ENCODE measurements at regions of chr19 and their contacts with region 1.

Region 1: DNA sequence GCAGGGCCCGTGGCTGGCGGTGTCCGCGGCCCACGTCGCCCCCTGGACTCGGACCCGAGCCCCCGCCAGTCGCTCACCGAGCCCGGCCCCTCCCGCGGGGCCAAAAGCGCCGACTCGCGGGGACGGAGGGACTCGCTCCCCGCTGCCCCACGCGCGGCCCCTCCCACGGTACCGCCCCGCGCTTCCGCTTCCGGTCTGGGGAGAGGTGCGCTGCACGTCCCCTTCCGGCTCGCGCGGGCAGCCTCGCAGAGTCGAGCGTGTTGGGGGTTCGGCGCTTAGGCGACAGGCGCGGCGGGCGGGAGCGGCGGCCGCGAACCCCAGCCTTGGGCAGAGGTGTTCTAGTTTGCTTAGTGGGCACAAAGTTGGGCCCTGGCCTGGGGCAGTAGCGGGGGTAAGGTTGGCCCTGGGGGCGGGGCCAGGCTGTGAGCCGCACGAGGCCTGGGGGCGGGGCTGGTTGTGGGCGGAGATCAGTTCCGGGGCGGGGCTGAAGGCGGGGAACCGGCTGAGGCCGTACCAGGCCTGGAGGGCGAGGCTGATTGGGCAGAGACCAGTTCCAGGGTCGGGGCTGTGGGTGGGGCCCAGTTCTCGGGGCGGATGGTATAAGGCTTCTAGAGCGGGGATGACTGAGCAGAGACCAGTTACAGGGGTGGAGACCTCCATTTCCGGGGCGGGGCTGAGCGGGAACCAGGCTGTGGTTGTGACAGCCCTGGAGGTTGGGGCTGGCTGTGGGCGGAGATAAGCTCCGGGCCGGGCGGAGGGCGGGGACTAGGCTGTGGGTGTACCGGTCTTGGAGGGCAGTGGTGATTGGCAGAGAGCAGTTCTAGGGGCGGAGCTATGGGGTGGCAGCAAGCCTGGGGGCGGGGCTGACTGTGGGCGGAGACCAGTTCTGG is at the starts of genes MBD3L1 and ZNF558:
- DNase-seq: peak; percentile 98 to 99
- ATAC-seq: peak; percentile 91 to 92
- H3K4me3 ChIP-seq: peak within 1 kb of the TSS; percentile 74 to 91 (median 83)
- H3K27ac ChIP-seq: peak within 1 kb of the TSS; percentile 91 to 96 (median 94)
- H3K4me1 ChIP-seq: peaks cover 8 to 12% of the 10 kb centered on the region in 2 donors
- H3K27me3 ChIP-seq: no peaks in the 10 kb centered on the region
- CTCF ChIP-seq: peak in 3 of 5 experiments; percentile 30 to 56 (median 42)
- POLR2A ChIP-seq: peak; percentile 82 to 92
- total RNA-seq, gene MBD3L1: not detected
- total RNA-seq, gene ZNF558: 14.4 to 24.5 (median 18.6) TPM

Region 2: GRCh38 chr19:7394731-7395359 is 1437.5 kb before region 1 on chr19:
- in situ Hi-C with region 1: no loop called
- intact Hi-C with region 1: loop called (anchors 5 kb)
- DNase-seq: peak; percentile 70 to 83
- ATAC-seq: peak; percentile 96 to 97
- H3K4me3 ChIP-seq: peak overlapping the region; percentile 92 to 100 (median 97)
- H3K27ac ChIP-seq: peak overlapping the region; percentile 80 to 87 (median 84)
- H3K4me1 ChIP-seq: peaks cover 25 to 31% of the 10 kb centered on the region in 2 donors
- H3K27me3 ChIP-seq: no peaks in the 10 kb centered on the region
- CTCF ChIP-seq: no peak
- POLR2A ChIP-seq: peak; percentile 37 to 46

Region 3: GRCh38 chr19:8321060-8321985 is 511.1 kb before region 1 on chr19 and contains the starts of genes NDUFA7 and RPS28:
- in situ Hi-C with region 1: no loop called
- intact Hi-C with region 1: loop called (anchors 10 kb)
- DNase-seq: peak; percentile 94 to 96
- ATAC-seq: peak; percentile 94 to 97
- H3K4me3 ChIP-seq: peak within 1 kb of the TSS; percentile 88 to 99 (median 94)
- H3K27ac ChIP-seq: peak within 1 kb of the TSS; percentile 93 to 99 (median 94)
- H3K4me1 ChIP-seq: peaks cover 23 to 30% of the 10 kb centered on the region in 2 donors
- H3K27me3 ChIP-seq: no peaks in the 10 kb centered on the region
- CTCF ChIP-seq: peak; percentile 27 to 61 (median 52)
- POLR2A ChIP-seq: peak; percentile 88 to 94
- total RNA-seq, gene NDUFA7: 75.3 to 129 (median 87.7) TPM
- total RNA-seq, gene RPS28: 248 to 436 (median 313) TPM

Region 4: GRCh38 chr19:8965887-8966286 is 133.5 kb after region 1 on chr19:
- in situ Hi-C with region 1: no loop called
- intact Hi-C with region 1: no loop called
- DNase-seq: no peak
- ATAC-seq: no peak
- H3K4me3 ChIP-seq: no peak overlapping the region
- H3K27ac ChIP-seq: no peak overlapping the region
- H3K4me1 ChIP-seq: no peaks in the 10 kb centered on the region
- H3K27me3 ChIP-seq: no peaks in the 10 kb centered on the region
- CTCF ChIP-seq: no peak
- POLR2A ChIP-seq: no peak

Region 5: GRCh38 chr19:9140159-9140874 is 307.9 kb after region 1 on chr19 and contains the start of gene ZNF317:
- in situ Hi-C with region 1: no loop called
- intact Hi-C with region 1: loop called (anchors 5 kb)
- DNase-seq: peak; percentile 87 to 91
- ATAC-seq: peak; percentile 99
- H3K4me3 ChIP-seq: peak within 1 kb of the TSS; percentile 84 to 88 (median 87)
- H3K27ac ChIP-seq: peak within 1 kb of the TSS; percentile 90 to 93 (median 92)
- H3K4me1 ChIP-seq: peaks cover 16 to 23% of the 10 kb centered on the region in 2 donors
- H3K27me3 ChIP-seq: no peaks in the 10 kb centered on the region
- CTCF ChIP-seq: no peak
- POLR2A ChIP-seq: peak; percentile 28 to 70
- total RNA-seq, gene ZNF317: 9.1 to 15.0 (median 12.2) TPM

Region 6: DNA sequence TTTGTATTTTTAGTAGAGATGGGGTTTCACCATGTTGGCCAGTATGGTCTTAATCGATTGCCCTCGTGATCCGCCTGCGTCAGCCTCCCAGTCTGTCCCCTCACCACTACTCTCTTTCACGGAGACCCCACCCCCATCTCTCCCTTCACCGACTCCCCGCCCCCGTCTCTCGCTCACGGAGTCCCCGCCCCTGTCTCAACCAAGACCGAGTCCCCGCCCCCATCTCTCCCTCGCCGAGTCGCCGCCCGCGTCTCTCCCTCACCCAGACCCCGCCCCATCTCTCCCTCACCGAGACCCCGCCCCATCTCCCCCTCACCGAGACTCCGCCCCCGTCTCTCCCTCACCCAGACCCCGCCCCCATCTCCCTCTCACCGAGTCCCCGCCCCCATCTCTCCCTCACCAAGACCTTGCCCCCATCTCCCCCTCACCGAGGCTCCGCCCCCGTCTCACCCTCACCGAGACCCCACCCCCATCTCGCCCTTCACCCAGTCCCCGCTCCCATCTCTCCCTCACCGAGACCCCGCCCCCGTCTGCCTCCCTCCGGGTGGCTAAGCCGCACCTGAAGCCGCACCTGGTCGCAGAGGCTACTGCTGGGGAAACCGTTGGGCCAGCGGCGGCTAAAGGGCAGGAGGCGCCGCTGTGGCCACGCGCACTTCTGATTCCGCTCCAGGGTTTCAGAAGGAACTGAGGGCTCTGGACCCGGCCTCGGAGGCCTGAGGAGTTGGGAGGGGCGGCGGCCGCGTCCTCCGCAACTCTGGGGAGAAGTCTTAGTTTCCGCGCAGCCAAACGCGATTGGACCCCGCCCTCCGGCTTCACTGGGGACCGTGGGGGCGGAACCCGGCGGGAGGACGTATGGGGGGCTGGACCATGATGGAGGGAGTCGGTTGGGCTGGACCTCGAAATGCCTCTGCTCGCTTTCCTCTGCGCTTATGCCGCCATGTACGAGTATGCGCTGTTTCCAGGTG is 953.3 kb after region 1 on chr19:
- in situ Hi-C with region 1: loop called in 1 of 4 experiments (anchors 25 kb)
- intact Hi-C with region 1: no loop called
- DNase-seq: peak; percentile 82
- ATAC-seq: peak; percentile 81 to 83
- H3K4me3 ChIP-seq: peak overlapping the region; percentile 66 to 77 (median 72)
- H3K27ac ChIP-seq: peak overlapping the region; percentile 86 to 94 (median 88)
- H3K4me1 ChIP-seq: no peaks in the 10 kb centered on the region
- H3K27me3 ChIP-seq: peaks cover 8 to 42% (median 36%) of the 10 kb centered on the region in 3 donors
- CTCF ChIP-seq: no peak
- POLR2A ChIP-seq: peak; percentile 41 to 73

Measured in gastrocnemius medialis (tissue), 4 donors.